ENCODE measurements at regions of chr1 and their contacts with region 1.

Region 1: GRCh38 chr1:147172168-147172992 is at the start of gene PRKAB2:
- DNase-seq: peak; percentile 98 to 99 (median 99)
- ATAC-seq: peak; percentile 98
- H3K4me3 ChIP-seq: peak within 1 kb of the TSS; percentile 89
- H3K27ac ChIP-seq: peak within 1 kb of the TSS; percentile 99
- H3K4me1 ChIP-seq: peaks cover 11% of the 10 kb centered on the region
- H3K27me3 ChIP-seq: no peaks in the 10 kb centered on the region
- total RNA-seq, gene PRKAB2: 14.2 to 39.0 (median 25.0) TPM

Region 2: GRCh38 chr1:147225193-147225730 is 52.9 kb after region 1 on chr1 and contains the start of gene FMO5:
- intact Hi-C with region 1: loop called in 1 of 4 experiments (anchors 10 kb)
- DNase-seq: peak; percentile 70 to 91 (median 85)
- ATAC-seq: peak; percentile 94 to 96
- H3K4me3 ChIP-seq: peak within 1 kb of the TSS; percentile 99
- H3K27ac ChIP-seq: peak within 1 kb of the TSS; percentile 70
- H3K4me1 ChIP-seq: no peaks in the 10 kb centered on the region
- H3K27me3 ChIP-seq: no peaks in the 10 kb centered on the region
- total RNA-seq, gene FMO5: 1.3 to 3.1 (median 1.8) TPM

Region 3: DNA sequence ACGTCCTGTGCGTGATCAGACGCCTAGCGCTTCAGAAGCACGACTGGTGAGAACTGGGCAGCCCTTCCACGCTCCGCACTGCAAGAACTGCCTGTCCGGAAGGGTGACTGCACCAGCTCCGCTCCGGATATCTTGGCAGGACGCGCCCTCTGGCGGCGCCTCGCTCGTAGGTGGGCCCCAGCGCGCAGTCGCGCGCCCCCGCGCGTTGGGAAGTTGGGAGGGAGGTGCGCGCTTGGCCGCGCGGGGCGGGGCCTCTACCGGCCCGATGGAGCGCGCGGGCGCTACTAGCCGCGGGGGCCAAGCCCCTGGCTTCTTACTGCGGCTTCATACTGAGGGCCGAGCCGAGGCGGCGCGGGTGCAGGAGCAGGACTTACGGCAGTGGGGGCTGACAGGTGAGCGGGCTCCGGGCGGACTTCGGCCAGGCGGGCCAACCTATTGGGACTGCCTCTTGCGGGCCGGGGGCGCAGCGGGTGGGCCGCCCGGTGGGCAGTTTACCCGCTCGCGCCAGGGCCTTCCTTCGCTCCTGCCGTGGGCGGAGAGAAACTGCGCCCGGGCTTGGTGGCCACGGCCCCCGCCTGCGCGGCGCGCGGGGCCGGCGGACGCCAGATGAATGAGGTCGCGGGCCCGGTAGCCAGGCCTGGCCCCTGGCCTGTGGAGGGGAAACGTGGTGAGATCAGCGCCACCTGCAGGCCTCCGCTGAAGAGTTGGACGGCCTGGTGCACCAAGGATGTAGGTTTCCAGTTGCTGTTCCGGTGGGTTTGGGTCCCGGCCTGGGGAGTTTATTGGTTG is 70.3 kb after region 1 on chr1 and contains the start of gene CHD1L:
- intact Hi-C with region 1: loop called in 3 of 4 experiments (anchors 1 to 5 kb)
- DNase-seq: peak; percentile 97 to 99 (median 98)
- ATAC-seq: peak; percentile 98 to 99
- H3K4me3 ChIP-seq: peak within 1 kb of the TSS; percentile 90
- H3K27ac ChIP-seq: peak within 1 kb of the TSS; percentile 93
- H3K4me1 ChIP-seq: peaks cover 2% of the 10 kb centered on the region
- H3K27me3 ChIP-seq: no peaks in the 10 kb centered on the region
- total RNA-seq, gene CHD1L: 10.2 to 11.0 (median 10.6) TPM